Transverse colon (tissue), 4 donors: ENCODE measurements at regions of chr1 and their contacts with region 1.

Region 1: GRCh38 chr1:179365320-179366092 is at the start of gene AXDND1:
- DNase-seq: peak; percentile 89
- H3K4me3 ChIP-seq: peak within 1 kb of the TSS; percentile 46 to 89 (median 60)
- H3K27ac ChIP-seq: peak within 1 kb of the TSS; percentile 89 to 99 (median 90)
- H3K4me1 ChIP-seq: peaks cover 0 to 10% (median 4%) of the 10 kb centered on the region in 4 donors
- H3K27me3 ChIP-seq: no peaks in the 10 kb centered on the region
- CTCF ChIP-seq: no peak
- EP300 ChIP-seq: no peak
- POLR2A ChIP-seq: peak; percentile 57
- total RNA-seq, gene AXDND1: 3.1 to 8.4 (median 4.0) TPM

Region 2: GRCh38 chr1:178542560-178543356 is 822.7 kb before region 1 on chr1:
- in situ Hi-C with region 1: loop called in 3 of 4 experiments (anchors 25 kb)
- intact Hi-C with region 1: no loop called
- DNase-seq: peak; percentile 94
- H3K4me3 ChIP-seq: peak overlapping the region; percentile 62 to 98 (median 71)
- H3K27ac ChIP-seq: peak overlapping the region; percentile 89 to 96 (median 92)
- H3K4me1 ChIP-seq: peaks cover 15 to 34% (median 21%) of the 10 kb centered on the region in 4 donors
- H3K27me3 ChIP-seq: no peaks in the 10 kb centered on the region
- CTCF ChIP-seq: peak; percentile 99 to 100 (median 100)
- EP300 ChIP-seq: no peak
- POLR2A ChIP-seq: peak; percentile 11

Region 3: DNA sequence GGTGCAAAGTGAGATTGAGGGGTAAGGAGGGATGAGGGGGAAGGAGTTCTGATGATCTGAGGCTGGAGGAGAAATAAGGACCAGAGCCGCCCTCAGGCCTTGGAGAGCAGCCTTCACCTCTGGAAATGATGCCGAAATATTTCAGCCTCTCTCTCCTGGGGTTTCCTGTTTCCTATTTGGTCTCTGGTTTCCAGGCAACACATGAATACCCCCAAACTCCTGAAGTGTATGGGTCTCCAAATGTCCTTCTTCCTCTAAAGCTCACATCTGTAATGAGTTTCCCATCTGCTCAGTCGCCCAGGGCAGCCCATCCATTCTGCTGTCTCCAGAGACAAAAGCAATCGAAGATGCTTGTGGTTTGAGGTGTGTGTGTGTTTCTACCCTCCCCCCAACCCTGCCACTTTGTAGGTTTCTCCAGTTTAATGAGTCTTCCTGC is 391.8 kb before region 1 on chr1:
- in situ Hi-C with region 1: no loop called
- intact Hi-C with region 1: no loop called
- DNase-seq: no peak
- H3K4me3 ChIP-seq: no peak overlapping the region
- H3K27ac ChIP-seq: no peak overlapping the region
- H3K4me1 ChIP-seq: peaks cover 0 to 4% (median 0%) of the 10 kb centered on the region in 4 donors
- H3K27me3 ChIP-seq: no peaks in the 10 kb centered on the region
- CTCF ChIP-seq: no peak
- EP300 ChIP-seq: no peak
- POLR2A ChIP-seq: no peak

Region 4: GRCh38 chr1:179081687-179082332 is 283.7 kb before region 1 on chr1 and contains the start of gene TOR3A:
- in situ Hi-C with region 1: loop called (anchors 5 to 25 kb)
- intact Hi-C with region 1: loop called (anchors 5 kb)
- DNase-seq: peak; percentile 96
- H3K4me3 ChIP-seq: peak within 1 kb of the TSS; percentile 84 to 94 (median 88)
- H3K27ac ChIP-seq: peak within 1 kb of the TSS; percentile 92 to 94 (median 94)
- H3K4me1 ChIP-seq: peaks cover 6 to 30% (median 22%) of the 10 kb centered on the region in 4 donors
- H3K27me3 ChIP-seq: no peaks in the 10 kb centered on the region
- CTCF ChIP-seq: peak in 1 of 5 experiments; percentile 23
- EP300 ChIP-seq: no peak
- POLR2A ChIP-seq: peak; percentile 83
- total RNA-seq, gene TOR3A: 66.2 to 308 (median 72.7) TPM

Region 5: DNA sequence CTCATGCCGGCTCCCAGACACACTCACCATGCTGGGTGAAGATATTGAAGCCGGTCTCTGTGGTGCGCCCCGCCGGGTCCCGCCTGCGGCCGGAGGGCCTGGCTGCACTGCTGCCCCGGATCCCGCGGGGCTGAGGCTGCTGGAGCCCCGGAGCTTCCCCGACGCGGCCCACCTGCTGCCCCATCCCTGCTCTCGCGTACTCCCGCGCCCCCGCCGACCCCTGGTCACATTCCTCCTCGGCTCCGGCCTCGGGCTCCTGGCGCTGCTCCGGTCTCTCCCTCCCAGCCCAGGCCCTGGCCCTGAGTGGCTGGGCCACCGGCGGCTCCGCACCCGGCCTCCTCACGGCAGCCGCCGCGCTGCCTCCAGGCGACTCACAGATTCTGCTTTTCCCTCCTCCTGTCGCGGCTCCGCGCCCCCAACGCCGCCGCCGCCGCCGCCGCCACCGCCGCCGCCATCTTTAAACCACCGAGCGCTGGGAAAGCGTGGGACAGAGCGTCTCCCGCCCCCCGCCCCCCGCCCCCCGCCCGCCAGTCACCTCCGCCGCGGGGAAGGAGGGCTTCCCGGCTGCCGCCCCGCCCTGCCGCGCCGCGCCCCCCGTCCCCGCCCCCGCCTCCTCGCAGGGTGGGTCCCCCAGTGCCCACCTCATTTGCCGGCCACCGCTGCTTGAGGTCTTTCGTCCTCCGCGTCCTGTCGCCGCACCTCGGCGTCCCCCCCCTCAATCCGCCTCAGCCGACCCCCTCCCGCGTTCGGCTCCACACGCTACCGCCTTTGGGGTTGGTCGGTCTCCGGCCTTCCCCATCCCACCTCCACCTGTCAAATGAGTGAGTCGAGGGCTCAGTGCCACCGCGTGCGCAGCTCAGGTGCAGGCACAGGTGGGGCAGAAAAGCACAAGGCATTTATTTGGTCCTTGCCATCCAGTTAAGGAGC is 136.0 kb before region 1 on chr1 and contains the start of gene ABL2:
- in situ Hi-C with region 1: loop called in 2 of 4 experiments (anchors 25 kb)
- intact Hi-C with region 1: no loop called
- DNase-seq: peak; percentile 47
- H3K4me3 ChIP-seq: peak within 1 kb of the TSS; percentile 58 to 99 (median 79)
- H3K27ac ChIP-seq: peak within 1 kb of the TSS; percentile 79 to 95 (median 86)
- H3K4me1 ChIP-seq: peaks cover 6 to 43% (median 17%) of the 10 kb centered on the region in 4 donors
- H3K27me3 ChIP-seq: no peaks in the 10 kb centered on the region
- CTCF ChIP-seq: no peak
- EP300 ChIP-seq: no peak
- POLR2A ChIP-seq: no peak
- total RNA-seq, gene ABL2: 9.6 to 51.7 (median 14.3) TPM

Region 6: DNA sequence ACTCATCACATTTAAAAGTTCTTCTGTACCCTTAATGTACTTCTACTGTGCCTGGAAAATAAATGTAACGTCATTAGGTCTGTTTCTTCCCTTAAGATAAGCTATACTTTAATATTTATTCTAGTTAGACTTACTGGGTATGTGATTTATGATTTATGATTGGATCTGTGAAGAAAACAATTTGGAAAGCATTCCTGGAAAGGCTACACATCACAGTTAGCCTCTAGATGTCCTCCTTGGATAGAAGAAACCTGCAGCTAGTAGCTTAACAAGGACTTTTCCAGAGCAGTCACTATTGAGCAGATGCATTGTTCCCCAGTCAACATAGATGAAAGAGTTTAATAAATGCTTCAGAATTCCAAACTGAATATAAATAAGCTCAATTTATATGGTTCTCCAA is 113.8 kb before region 1 on chr1:
- in situ Hi-C with region 1: loop called (anchors 10 to 25 kb)
- intact Hi-C with region 1: no loop called
- DNase-seq: no peak
- H3K4me3 ChIP-seq: no peak overlapping the region
- H3K27ac ChIP-seq: no peak overlapping the region
- H3K4me1 ChIP-seq: no peaks in the 10 kb centered on the region
- H3K27me3 ChIP-seq: no peaks in the 10 kb centered on the region
- CTCF ChIP-seq: peak; percentile 30 to 60 (median 44)
- EP300 ChIP-seq: no peak
- POLR2A ChIP-seq: no peak

Region 7: GRCh38 chr1:179327679-179328078 is 37.8 kb before region 1 on chr1:
- in situ Hi-C with region 1: no loop called
- intact Hi-C with region 1: no loop called
- DNase-seq: no peak
- H3K4me3 ChIP-seq: no peak overlapping the region
- H3K27ac ChIP-seq: no peak overlapping the region
- H3K4me1 ChIP-seq: peaks cover 0 to 9% (median 4%) of the 10 kb centered on the region in 4 donors
- H3K27me3 ChIP-seq: no peaks in the 10 kb centered on the region
- CTCF ChIP-seq: no peak
- EP300 ChIP-seq: no peak
- POLR2A ChIP-seq: no peak

Region 8: GRCh38 chr1:180662709-180663108 is 1297.2 kb after region 1 on chr1:
- in situ Hi-C with region 1: no loop called
- intact Hi-C with region 1: no loop called
- DNase-seq: no peak
- H3K4me3 ChIP-seq: no peak overlapping the region
- H3K27ac ChIP-seq: no peak overlapping the region
- H3K4me1 ChIP-seq: no peaks in the 10 kb centered on the region
- H3K27me3 ChIP-seq: no peaks in the 10 kb centered on the region
- CTCF ChIP-seq: no peak
- EP300 ChIP-seq: no peak
- POLR2A ChIP-seq: no peak